Right ventricle myocardium superior (tissue), 1 donor: ENCODE measurements at regions of chr20 and their contacts with region 1.

Region 1: GRCh38 chr20:7161690-7162089 is 394.2 kb downstream of the BMP2 start:
- DNase-seq: no peak
- ATAC-seq: peak; percentile 68

Region 2: DNA sequence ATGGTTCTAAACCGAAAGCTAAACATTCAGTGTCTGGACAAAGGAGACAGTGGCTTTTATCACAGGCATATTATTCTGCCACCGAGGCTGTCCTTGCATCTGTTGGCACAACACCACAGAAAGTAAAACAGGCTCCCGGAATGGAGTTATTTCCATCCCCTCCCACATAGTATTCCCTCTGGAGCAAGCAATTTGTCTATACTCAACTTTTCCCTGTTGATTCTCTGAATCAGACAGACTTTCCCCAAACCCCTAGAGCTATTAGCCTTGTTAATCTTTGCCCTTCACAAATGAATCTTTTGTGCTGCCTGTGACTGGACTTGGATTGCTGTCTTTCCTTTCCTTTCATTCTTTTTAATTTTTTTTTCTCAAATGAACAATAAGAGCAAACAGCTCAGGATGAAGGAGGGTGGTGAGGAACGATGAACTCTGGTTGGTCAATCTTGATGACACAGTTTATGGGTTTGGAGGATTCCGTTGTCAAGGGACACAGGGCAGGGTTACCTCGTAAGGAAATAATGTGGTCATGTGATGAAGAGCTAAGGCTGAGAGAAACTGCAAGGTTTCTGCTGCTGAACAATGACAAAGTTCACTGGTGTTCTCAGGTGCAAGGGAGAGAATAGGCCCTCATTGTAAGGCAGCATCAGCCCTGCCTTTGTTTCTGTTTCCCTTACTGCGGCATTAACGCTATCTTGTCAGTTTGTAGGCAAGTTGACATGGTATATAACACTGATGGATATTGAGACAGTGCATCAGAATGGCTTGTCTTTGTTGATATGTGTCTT is 669.2 kb before region 1 on chr20:
- intact Hi-C with region 1: no loop called
- DNase-seq: no peak
- ATAC-seq: no peak

Region 3: DNA sequence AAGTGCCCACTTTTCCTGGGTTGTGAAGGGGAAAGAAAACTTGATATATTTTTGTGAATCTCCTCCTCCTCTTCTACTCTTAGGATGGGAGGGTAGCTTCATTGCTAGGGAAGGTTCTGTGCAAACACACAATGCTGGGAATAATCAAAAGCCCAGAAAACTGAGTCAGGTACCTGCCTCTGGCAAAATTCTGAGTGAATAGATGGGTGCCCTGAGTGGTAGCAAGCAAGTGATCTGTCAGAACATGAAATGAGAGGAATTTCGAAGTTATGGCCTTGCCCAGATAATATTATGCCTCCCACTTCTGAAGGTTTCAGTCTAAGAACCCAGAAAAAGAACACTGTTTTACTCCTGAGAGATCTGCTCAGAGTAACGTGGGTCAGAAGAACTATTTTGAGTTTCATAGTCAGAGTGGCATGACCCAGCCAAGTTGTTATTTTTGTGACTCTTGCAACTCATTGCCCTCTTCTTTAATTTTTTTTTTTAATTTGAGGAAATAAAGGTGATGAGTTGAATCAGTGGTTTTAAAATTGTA is 235.9 kb before region 1 on chr20:
- intact Hi-C with region 1: no loop called
- DNase-seq: no peak
- ATAC-seq: no peak

Region 4: DNA sequence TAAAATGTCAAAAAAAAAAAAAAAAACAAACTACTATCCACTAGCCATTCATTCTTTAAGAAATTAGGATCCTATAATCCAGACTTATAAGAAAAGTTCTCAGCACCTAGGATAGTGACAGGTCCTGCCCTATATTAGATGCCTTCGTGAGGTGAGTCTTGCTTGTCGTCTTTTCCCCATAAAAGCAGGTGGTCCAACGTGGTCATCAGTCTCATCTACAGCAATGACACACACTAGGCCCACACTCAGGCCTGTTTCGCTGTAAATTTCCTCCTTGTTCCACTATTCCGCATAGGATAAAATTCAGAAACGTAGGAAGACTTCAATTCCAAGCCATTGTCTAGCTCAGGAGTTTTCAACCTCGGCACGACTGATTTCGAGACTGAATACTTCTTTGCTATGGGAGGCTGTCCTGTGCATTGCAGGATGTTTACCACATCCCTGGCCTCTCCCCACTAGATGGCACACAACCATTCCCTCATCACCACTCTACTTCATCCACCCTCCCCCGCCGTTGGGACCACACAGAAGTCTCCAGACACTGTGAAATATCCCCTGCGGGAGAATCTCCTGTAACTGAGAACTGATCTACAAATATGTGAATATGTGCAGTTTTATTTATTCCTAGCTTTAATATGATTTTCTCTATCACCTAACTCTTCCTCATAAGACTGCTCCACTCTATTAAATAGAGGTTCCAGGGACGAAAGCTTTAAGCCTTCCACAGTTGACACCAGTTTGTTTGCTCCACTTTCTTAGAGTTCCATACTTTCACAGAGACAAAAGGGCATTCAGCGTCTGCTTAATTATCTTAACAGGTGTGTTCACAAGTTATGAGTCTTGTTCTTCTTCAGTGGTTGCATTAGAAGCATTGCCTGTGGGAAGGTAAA is 47.9 kb before region 1 on chr20:
- intact Hi-C with region 1: loop called (anchors 5 kb)
- DNase-seq: peak; percentile 50
- ATAC-seq: peak; percentile 98